Heart right ventricle (tissue), 16 donors: ENCODE measurements at regions of chr7 and their contacts with region 1.

Region 1: GRCh38 chr7:11726794-11727155 is 105.2 kb downstream of the THSD7A start:
- DNase-seq: peak; percentile 10 to 34
- ATAC-seq: peak in 7 of 8 donors; percentile 48 to 81 (median 65)
- H3K4me3 ChIP-seq: no peak overlapping the region
- H3K27ac ChIP-seq: no peak overlapping the region
- H3K4me1 ChIP-seq: peaks cover 0 to 10% (median 0%) of the 10 kb centered on the region in 9 donors
- H3K27me3 ChIP-seq: no peaks in the 10 kb centered on the region
- CTCF ChIP-seq: no peak

Region 2: DNA sequence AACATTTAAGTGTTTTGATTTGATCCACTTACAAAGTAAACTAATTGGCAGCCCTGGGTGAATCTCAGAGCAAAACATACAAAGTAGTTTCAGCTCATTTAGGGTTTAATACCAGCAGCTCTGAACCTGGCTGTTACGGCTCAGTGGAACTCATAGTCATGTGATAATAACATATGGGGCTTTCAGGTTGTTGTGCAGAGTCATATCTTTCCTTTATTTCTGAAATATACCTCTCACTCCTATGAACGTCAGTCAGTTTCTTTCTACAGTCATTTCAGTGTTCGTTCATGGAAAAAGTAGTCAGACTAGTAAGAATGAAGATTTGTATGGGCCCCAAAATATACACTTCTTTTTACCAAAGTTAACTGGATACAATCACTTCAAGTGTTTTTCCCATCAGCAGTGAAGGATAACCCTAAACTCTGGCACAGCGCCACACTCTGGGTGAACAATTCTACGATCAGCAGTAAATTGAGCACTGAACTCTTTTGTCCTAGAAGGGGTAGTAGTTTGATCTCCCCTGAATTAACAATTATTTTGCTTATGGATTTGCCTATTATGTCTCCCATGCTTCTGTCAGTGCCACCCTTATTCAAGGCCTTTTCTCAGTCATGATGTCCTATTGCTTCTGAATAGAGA is 113.4 kb before region 1 on chr7:
- intact Hi-C with region 1: loop called in 1 of 10 experiments (anchors 10 kb)
- DNase-seq: no peak
- ATAC-seq: no peak
- H3K4me3 ChIP-seq: no peak overlapping the region
- H3K27ac ChIP-seq: no peak overlapping the region
- H3K4me1 ChIP-seq: peaks cover 0 to 13% (median 0%) of the 10 kb centered on the region in 9 donors
- H3K27me3 ChIP-seq: no peaks in the 10 kb centered on the region
- CTCF ChIP-seq: no peak

Region 3: DNA sequence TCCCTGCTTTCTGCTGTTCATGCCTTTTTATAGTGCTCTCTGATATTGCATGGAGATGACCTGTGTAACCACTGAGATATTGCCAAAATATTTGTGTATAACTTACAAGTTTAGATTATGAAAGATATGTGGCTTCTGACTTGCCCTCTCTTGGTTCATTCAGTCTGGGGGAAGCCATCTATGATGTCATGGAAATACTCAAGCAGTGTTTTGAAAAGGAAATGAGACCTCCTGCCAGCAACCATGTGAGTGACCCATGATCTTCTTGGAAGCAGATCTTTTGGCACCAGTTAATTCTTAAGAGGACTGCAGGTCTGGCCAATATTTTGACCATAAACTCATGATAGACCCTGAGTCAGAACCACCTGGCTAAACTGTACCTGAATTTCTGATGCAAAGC is 77.8 kb before region 1 on chr7:
- intact Hi-C with region 1: no loop called
- DNase-seq: peak in 1 of 2 donors; percentile 10
- ATAC-seq: peak in 7 of 8 donors; percentile 35 to 86 (median 58)
- H3K4me3 ChIP-seq: no peak overlapping the region
- H3K27ac ChIP-seq: no peak overlapping the region
- H3K4me1 ChIP-seq: peaks cover 0 to 16% (median 8%) of the 10 kb centered on the region in 9 donors
- H3K27me3 ChIP-seq: no peaks in the 10 kb centered on the region
- CTCF ChIP-seq: no peak

Region 4: GRCh38 chr7:11681461-11681860 is 45.3 kb before region 1 on chr7:
- intact Hi-C with region 1: loop called in 1 of 10 experiments (anchors 5 kb)
- DNase-seq: no peak
- ATAC-seq: no peak
- H3K4me3 ChIP-seq: no peak overlapping the region
- H3K27ac ChIP-seq: no peak overlapping the region
- H3K4me1 ChIP-seq: no peaks in the 10 kb centered on the region
- H3K27me3 ChIP-seq: no peaks in the 10 kb centered on the region
- CTCF ChIP-seq: no peak

Region 5: DNA sequence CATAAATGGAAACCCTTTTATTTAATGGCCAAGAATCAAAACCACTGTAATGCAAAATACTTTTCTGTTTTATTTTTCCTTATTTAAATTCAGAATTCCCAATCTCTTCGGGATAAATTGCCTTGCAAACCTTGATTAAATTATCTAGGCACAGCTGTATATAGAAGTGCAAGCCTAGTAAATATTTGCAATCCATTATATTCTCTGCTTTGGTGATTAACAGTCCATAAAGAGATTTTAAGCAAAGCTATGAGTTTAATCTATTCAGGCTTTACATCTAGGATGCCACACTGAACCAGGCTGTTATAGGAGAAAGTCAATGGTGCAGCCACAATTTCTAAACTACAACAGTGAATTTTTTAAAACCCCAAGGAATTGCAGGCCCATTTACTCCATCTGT is 148.9 kb after region 1 on chr7:
- intact Hi-C with region 1: no loop called
- DNase-seq: no peak
- ATAC-seq: no peak
- H3K4me3 ChIP-seq: no peak overlapping the region
- H3K27ac ChIP-seq: no peak overlapping the region
- H3K4me1 ChIP-seq: no peaks in the 10 kb centered on the region
- H3K27me3 ChIP-seq: no peaks in the 10 kb centered on the region
- CTCF ChIP-seq: no peak